GM12878 (cell line): ENCODE measurements at regions of chr10 and their contacts with region 1.

Region 1: GRCh38 chr10:72364239-72364777 is 9.6 kb upstream of the DNAJB12 start:
- DNase-seq: peak; percentile 59
- ATAC-seq: peak; percentile 100
- H3K4me3 ChIP-seq: no peak overlapping the region
- H3K27ac ChIP-seq: 0 out of 2 replicates have a peak overlapping the region, but pooled peaks have one; percentile 29
- H3K4me1 ChIP-seq: peaks cover 3% of the 10 kb centered on the region
- H3K27me3 ChIP-seq: no peaks in the 10 kb centered on the region
- CTCF ChIP-seq: peak; percentile 94 to 96 (median 94)
- EP300 ChIP-seq: no peak
- POLR2A ChIP-seq: peak; percentile 84
- RAD21 ChIP-seq: peak; percentile 99

Region 2: GRCh38 chr10:72375585-72375984 is 11.3 kb after region 1 on chr10:
- CTCF ChIA-PET with region 1: interaction called, 20 read pairs
- POLR2A ChIA-PET with region 1: interaction called, 5 read pairs
- RAD21 ChIA-PET with region 1: interaction called, 3 read pairs
- SMC1A ChIA-PET with region 1: interaction called, 9 read pairs
- in situ Hi-C with region 1: no loop called
- intact Hi-C with region 1: no loop called
- DNase-seq: no peak
- ATAC-seq: peak; percentile 76
- H3K4me3 ChIP-seq: no peak overlapping the region
- H3K27ac ChIP-seq: no peak overlapping the region
- H3K4me1 ChIP-seq: no peaks in the 10 kb centered on the region
- H3K27me3 ChIP-seq: no peaks in the 10 kb centered on the region
- CTCF ChIP-seq: peak; percentile 14 to 37 (median 26); a peak in 4 of 6 replicates
- EP300 ChIP-seq: no peak
- POLR2A ChIP-seq: no peak
- RAD21 ChIP-seq: peak; percentile 50

Region 3: DNA sequence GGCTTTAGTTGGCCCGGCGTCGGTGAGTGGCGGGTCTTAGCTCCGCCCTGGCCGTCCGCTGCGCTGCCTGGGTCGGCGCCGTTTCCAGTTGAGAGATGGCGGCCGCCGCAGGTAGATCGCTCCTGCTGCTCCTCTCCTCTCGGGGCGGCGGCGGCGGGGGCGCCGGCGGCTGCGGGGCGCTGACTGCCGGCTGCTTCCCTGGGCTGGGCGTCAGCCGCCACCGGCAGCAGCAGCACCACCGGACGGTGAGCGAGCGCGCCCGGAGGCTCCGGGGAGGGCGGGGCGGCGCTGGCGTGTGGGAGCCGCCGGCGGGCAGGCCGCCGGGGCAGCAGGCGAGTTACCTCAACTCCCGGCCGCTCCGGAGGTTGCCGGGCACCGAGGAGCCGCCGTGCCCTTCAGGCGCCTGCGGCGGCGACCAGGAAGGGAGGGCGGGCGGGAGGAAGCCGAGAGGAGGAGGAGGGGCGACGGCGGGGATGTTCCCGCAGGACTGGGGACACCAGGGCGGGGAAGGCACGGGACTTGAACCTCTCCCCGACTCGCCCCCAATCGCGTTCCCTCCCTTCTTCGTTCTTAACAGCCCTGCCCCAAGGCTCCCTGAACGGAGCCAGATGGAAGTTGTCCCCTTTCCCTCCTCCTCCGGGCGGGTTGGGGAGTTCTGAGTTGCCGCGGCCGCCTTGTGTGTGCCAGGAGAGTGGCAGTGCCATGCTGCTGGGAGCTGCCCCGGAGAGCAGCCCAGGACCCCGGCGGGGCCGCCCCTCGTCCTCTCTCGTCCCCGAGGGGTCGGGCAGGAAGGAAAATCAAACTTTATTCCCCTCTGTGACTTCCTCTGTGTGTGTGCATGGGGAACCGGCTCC is 328.0 kb after region 1 on chr10 and contains the start of gene MCU:
- CTCF ChIA-PET with region 1: interaction called, 26 read pairs
- POLR2A ChIA-PET with region 1: interaction called, 4 read pairs
- RAD21 ChIA-PET with region 1: interaction called, 4 read pairs
- SMC1A ChIA-PET with region 1: interaction called, 7 read pairs
- in situ Hi-C with region 1: no loop called
- intact Hi-C with region 1: loop called (anchors 2 kb)
- DNase-seq: no peak
- ATAC-seq: peak; percentile 93
- H3K4me3 ChIP-seq: peak within 1 kb of the TSS; percentile 90
- H3K27ac ChIP-seq: peak within 1 kb of the TSS; percentile 50
- H3K4me1 ChIP-seq: peaks cover 10% of the 10 kb centered on the region
- H3K27me3 ChIP-seq: no peaks in the 10 kb centered on the region
- CTCF ChIP-seq: no peak
- EP300 ChIP-seq: no peak
- POLR2A ChIP-seq: peak; percentile 86
- RAD21 ChIP-seq: no peak
- polyA plus RNA-seq, gene MCU: 5.1 to 7.6 TPM

Region 4: GRCh38 chr10:72702868-72703581 is 338.7 kb after region 1 on chr10:
- CTCF ChIA-PET with region 1: no interaction called
- POLR2A ChIA-PET with region 1: no interaction called
- RAD21 ChIA-PET with region 1: no interaction called
- SMC1A ChIA-PET with region 1: no interaction called
- in situ Hi-C with region 1: no loop called
- intact Hi-C with region 1: no loop called
- DNase-seq: no peak
- ATAC-seq: peak; percentile 94
- H3K4me3 ChIP-seq: no peak overlapping the region
- H3K27ac ChIP-seq: no peak overlapping the region
- H3K4me1 ChIP-seq: no peaks in the 10 kb centered on the region
- H3K27me3 ChIP-seq: no peaks in the 10 kb centered on the region
- CTCF ChIP-seq: no peak
- EP300 ChIP-seq: no peak
- POLR2A ChIP-seq: no peak
- RAD21 ChIP-seq: no peak

Region 5: GRCh38 chr10:72875250-72876055 is 511.1 kb after region 1 on chr10:
- CTCF ChIA-PET with region 1: interaction called, 19 read pairs
- POLR2A ChIA-PET with region 1: no interaction called
- RAD21 ChIA-PET with region 1: interaction called, 10 read pairs
- SMC1A ChIA-PET with region 1: interaction called, 17 read pairs
- in situ Hi-C with region 1: loop called (anchors 5 kb)
- intact Hi-C with region 1: loop called (anchors 1 kb)
- DNase-seq: no peak
- ATAC-seq: peak; percentile 61
- H3K4me3 ChIP-seq: no peak overlapping the region
- H3K27ac ChIP-seq: no peak overlapping the region
- H3K4me1 ChIP-seq: no peaks in the 10 kb centered on the region
- H3K27me3 ChIP-seq: no peaks in the 10 kb centered on the region
- CTCF ChIP-seq: peak; percentile 44 to 58 (median 47); a peak in 5 of 6 replicates
- EP300 ChIP-seq: no peak
- POLR2A ChIP-seq: no peak
- RAD21 ChIP-seq: peak; percentile 75

Region 6: DNA sequence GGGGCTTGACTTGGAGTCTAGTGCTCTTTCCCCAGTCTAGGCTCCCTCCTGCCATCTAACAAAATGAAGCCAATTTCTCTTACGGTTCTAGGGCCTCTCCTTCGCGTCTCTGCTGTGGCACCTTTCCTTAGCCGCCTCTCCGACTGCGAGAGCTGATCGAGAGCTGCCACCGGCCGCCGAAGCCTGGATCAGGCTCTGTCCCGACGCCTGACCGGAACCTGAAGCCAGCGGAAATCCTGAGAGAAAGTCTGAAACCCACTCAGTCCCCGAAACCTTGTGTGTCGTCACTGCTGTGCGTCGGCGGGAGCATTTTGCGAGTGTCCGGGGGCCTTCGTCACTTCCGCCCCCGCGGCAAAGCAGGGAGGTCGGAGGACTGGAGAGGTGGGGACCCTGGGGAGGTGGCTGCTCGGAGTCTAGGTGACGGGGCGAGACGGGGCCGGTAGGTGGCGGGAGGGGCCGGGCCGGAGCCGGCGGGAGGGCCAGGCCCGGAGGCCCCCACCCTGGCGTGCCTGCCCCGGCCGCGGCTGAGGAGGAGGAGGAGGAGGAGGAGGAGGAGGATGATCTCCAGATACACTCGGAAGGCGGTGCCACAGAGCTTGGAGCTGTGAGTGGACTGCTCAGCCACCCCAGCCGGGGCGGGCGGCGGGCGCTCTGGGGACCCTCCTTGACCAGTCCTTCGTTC is 803.6 kb after region 1 on chr10 and contains the starts of genes ECD and FAM149B1:
- CTCF ChIA-PET with region 1: no interaction called
- POLR2A ChIA-PET with region 1: no interaction called
- RAD21 ChIA-PET with region 1: no interaction called
- SMC1A ChIA-PET with region 1: no interaction called
- in situ Hi-C with region 1: loop called (anchors 10 kb)
- intact Hi-C with region 1: no loop called
- DNase-seq: peak; percentile 79
- ATAC-seq: peak; percentile 95
- H3K4me3 ChIP-seq: peak within 1 kb of the TSS; percentile 96
- H3K27ac ChIP-seq: peak within 1 kb of the TSS; percentile 84
- H3K4me1 ChIP-seq: no peaks in the 10 kb centered on the region
- H3K27me3 ChIP-seq: no peaks in the 10 kb centered on the region
- CTCF ChIP-seq: peak in 2 of 3 experiments; percentile 27 to 30; a peak in 3 of 6 replicates
- EP300 ChIP-seq: peak in 1 of 2 experiments; percentile 37; a peak in 1 of 4 replicates
- POLR2A ChIP-seq: peak; percentile 96
- RAD21 ChIP-seq: no peak
- polyA plus RNA-seq, gene ECD: 27.3 to 29.9 TPM
- polyA plus RNA-seq, gene FAM149B1: 6.6 to 11.6 TPM